Gastrocnemius medialis (tissue), 4 donors: ENCODE measurements at regions of chr3 and their contacts with region 1.

Region 1: GRCh38 chr3:112642912-112643506 is 2.1 kb upstream of the CCDC80 start:
- DNase-seq: peak; percentile 59 to 71
- ATAC-seq: peak; percentile 67 to 69
- H3K4me3 ChIP-seq: peak overlapping the region in 1 of 4 donors; percentile 34
- H3K27ac ChIP-seq: no peak overlapping the region
- H3K4me1 ChIP-seq: peaks cover 18 to 28% of the 10 kb centered on the region in 2 donors
- H3K27me3 ChIP-seq: no peaks in the 10 kb centered on the region
- CTCF ChIP-seq: peak; percentile 38 to 78 (median 63)
- POLR2A ChIP-seq: no peak

Region 2: GRCh38 chr3:112814266-112814665 is 171.3 kb after region 1 on chr3:
- in situ Hi-C with region 1: loop called in 3 of 4 experiments (anchors 5 to 10 kb)
- intact Hi-C with region 1: loop called (anchors 1 kb)
- DNase-seq: no peak
- ATAC-seq: no peak
- H3K4me3 ChIP-seq: no peak overlapping the region
- H3K27ac ChIP-seq: no peak overlapping the region
- H3K4me1 ChIP-seq: peaks cover 0 to 4% of the 10 kb centered on the region in 2 donors
- H3K27me3 ChIP-seq: no peaks in the 10 kb centered on the region
- CTCF ChIP-seq: peak in 1 of 5 experiments; percentile 18
- POLR2A ChIP-seq: no peak

Region 3: DNA sequence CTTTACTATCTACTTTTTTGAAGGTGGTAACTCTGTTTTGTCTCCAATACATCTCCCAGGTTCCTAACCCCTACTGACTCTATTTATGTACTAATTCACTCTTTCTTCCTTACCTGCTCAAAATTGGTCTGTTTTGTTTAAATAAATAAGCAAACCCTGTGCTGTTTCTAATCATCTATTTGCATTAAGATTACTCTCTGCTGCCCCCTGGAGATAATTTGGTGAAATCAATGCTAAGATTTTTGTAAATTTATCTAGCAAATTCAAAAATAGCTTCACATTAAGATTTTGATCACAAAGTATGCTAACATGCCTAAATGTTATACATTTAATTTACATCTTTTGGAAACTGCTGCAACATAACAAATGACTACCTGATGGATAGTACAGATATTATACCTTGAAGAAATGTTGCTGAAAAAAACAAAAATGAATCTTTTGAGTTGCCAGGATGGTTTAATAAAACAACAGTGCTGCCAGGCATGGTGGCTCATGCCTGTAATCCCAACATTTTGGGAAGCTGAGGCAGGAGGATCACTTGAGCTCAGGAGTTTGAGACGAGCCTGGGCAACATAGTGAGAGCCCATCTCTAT is 336.3 kb after region 1 on chr3:
- in situ Hi-C with region 1: loop called in 3 of 4 experiments (anchors 5 to 10 kb)
- intact Hi-C with region 1: loop called (anchors 1 kb)
- DNase-seq: no peak
- ATAC-seq: no peak
- H3K4me3 ChIP-seq: no peak overlapping the region
- H3K27ac ChIP-seq: no peak overlapping the region
- H3K4me1 ChIP-seq: peaks cover 0 to 4% of the 10 kb centered on the region in 2 donors
- H3K27me3 ChIP-seq: no peaks in the 10 kb centered on the region
- CTCF ChIP-seq: peak; percentile 46 to 80 (median 57)
- POLR2A ChIP-seq: no peak

Region 4: DNA sequence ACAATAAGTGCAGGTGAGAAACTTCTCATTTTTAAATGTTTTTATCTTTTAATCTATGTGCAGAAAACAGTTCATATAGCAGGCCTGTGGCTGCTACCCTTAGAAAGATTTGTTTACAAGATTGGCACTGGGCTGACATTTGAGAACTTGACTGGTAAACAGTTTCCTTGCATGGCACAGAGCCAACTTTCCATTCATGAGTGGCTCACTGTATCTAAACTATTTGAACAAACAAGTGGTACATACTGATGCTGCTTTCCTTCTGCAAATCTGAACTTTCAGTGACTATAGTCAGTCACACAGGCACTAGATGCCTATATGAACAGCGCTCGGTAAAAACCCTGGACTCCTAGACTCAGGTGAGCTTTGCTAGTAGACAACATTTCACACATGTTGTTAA is 341.5 kb after region 1 on chr3:
- in situ Hi-C with region 1: loop called (anchors 5 to 10 kb)
- intact Hi-C with region 1: loop called (anchors 1 kb)
- DNase-seq: peak; percentile 17 to 34
- ATAC-seq: peak; percentile 53 to 92
- H3K4me3 ChIP-seq: no peak overlapping the region
- H3K27ac ChIP-seq: peak overlapping the region in 2 of 4 donors; percentile 7 to 52
- H3K4me1 ChIP-seq: peaks cover 0 to 11% of the 10 kb centered on the region in 2 donors
- H3K27me3 ChIP-seq: no peaks in the 10 kb centered on the region
- CTCF ChIP-seq: no peak
- POLR2A ChIP-seq: no peak

Region 5: DNA sequence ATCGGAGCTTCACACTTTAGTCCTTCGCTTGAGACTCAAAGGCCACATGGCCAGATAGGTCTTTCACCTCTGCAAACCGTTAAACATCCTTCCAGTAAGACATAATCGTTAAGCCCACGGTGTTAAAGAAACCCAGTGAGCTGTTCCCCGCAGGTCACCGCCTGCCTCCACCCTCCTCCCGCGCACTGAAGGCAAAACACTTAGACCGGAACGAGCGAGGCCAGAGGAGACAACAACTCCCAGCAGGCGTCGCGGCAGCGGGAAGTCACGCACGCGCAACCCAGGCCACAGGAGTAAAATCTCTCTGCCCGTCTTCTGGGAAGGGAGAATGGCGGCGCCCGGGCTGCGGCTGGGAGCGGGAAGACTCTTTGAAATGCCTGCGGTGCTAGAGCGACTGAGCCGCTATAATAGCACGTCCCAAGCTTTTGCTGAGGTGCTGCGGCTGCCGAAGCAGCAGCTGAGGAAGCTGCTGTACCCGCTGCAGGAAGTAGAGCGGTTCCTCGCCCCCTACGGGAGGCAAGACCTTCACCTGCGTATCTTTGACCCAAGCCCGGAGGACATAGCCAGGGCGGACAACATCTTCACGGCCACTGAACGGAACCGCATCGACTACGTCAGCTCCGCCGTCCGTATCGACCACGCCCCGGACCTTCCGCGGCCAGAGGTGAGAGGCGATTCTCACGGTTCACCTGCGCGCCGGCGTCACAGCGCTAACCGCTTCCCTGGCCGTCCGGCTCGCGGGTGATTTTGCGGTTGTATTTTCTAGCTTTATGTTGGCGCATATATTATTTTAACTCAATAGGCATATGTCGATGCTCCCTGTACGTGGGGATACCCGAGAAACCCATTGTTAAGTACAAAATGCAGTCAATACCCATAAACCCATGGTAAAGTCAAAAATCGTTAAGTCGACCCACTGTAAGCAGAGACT is 347.9 kb after region 1 on chr3 and contains the start of gene GTPBP8:
- in situ Hi-C with region 1: loop called in 3 of 4 experiments (anchors 5 to 10 kb)
- intact Hi-C with region 1: loop called (anchors 5 kb)
- DNase-seq: peak; percentile 86 to 87
- ATAC-seq: peak; percentile 98
- H3K4me3 ChIP-seq: peak within 1 kb of the TSS; percentile 82 to 89 (median 88)
- H3K27ac ChIP-seq: peak within 1 kb of the TSS; percentile 92 to 97 (median 94)
- H3K4me1 ChIP-seq: peaks cover 20 to 21% of the 10 kb centered on the region in 2 donors
- H3K27me3 ChIP-seq: no peaks in the 10 kb centered on the region
- CTCF ChIP-seq: peak in 3 of 5 experiments; percentile 15 to 28 (median 22)
- POLR2A ChIP-seq: peak; percentile 71 to 86
- total RNA-seq, gene GTPBP8: 21.4 to 78.3 (median 40.7) TPM